Activated T-helper 1 cell treated with anti-CD3 and anti-CD28 coated beads, Interleukin-12 subunit alpha, Interleukin-12 subunit beta, Interleukin-2, Interleukin-4 antibody, amounts not matched to agents 30 ng/mL and 10 ng/mL and 1 ng/mL, durations not matched to agents 14 hours and 24 hours and 36 hours (primary cell): ENCODE measurements at regions of chr3 and their contacts with region 1.

Region 1: GRCh38 chr3:15520185-15520584 is 1.3 kb downstream of the COLQ start:
- DNase-seq: no peak
- H3K4me3 Mint-ChIP-seq: peak overlapping the region; percentile 2
- H3K27ac Mint-ChIP-seq: no peak overlapping the region
- H3K4me1 Mint-ChIP-seq: peaks cover 25% of the 10 kb centered on the region
- H3K27me3 Mint-ChIP-seq: peaks cover 8% of the 10 kb centered on the region

Region 2: GRCh38 chr3:15486979-15487378 is 33.2 kb before region 1 on chr3:
- intact Hi-C with region 1: loop called (anchors 5 kb)
- DNase-seq: no peak
- H3K4me3 Mint-ChIP-seq: no peak overlapping the region
- H3K27ac Mint-ChIP-seq: no peak overlapping the region
- H3K4me1 Mint-ChIP-seq: peaks cover 7% of the 10 kb centered on the region
- H3K27me3 Mint-ChIP-seq: peaks cover 18% of the 10 kb centered on the region